Transverse colon (tissue), 4 donors: ENCODE measurements at regions of chr6 and their contacts with region 1.

Region 1: DNA sequence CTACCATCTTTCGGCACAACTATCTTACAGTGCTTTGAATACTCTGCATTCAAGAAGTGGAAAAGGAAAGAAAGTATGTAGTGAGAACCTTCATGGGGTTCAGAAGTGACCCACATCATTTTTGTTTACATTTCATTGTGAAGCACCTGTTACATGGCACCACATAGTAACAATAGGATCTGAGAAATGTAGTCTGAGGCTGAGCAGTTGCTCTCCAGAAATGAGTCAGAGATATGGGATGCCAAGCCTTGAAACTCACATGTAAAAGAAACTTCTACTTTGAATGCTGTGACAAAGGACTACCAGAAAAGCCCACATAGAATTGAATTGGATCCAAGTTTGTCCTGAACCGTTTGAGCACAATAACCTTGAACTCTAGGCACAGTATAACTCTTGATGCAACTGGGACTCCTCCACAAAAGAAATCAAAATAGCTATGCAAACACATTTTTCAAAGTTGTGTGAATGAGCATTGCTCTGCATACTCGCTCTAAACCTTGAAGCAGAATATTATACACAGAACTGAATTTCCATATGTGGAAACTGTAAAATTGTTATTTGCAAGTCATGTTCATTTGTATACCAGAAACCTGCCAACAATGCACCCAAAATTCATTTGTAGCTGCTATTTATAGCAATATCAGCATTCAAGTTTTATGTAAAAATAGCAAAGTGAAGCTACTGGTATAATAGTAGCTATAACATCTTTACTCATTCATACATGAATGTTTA is 400.9 kb upstream of the POU3F2 start:
- DNase-seq: no peak
- H3K4me3 ChIP-seq: no peak overlapping the region
- H3K27ac ChIP-seq: no peak overlapping the region
- H3K4me1 ChIP-seq: no peaks in the 10 kb centered on the region
- H3K27me3 ChIP-seq: no peaks in the 10 kb centered on the region
- CTCF ChIP-seq: no peak
- EP300 ChIP-seq: no peak
- POLR2A ChIP-seq: no peak

Region 2: DNA sequence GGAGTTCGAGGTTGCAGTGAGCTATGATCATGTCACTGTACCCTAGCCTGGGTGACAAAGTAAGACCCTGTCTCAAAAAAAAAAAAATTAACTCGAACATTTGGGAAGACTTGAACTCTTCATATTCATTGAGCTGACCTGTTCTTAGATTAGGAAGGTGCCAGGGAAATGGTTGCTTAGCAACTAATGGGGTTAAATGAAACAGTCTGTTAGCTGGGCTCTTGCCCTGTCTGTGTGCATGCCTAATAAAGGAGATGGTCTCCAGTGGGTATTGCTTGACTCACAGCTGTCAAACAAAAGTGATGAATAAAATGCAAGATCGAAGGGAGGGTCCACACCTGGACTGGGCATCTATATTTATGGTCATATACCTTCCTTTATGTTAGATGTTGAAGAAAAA is 1407.2 kb before region 1 on chr6:
- in situ Hi-C with region 1: no loop called
- intact Hi-C with region 1: loop called (anchors 5 kb)
- DNase-seq: no peak
- H3K4me3 ChIP-seq: no peak overlapping the region
- H3K27ac ChIP-seq: no peak overlapping the region
- H3K4me1 ChIP-seq: no peaks in the 10 kb centered on the region
- H3K27me3 ChIP-seq: no peaks in the 10 kb centered on the region
- CTCF ChIP-seq: no peak
- EP300 ChIP-seq: no peak
- POLR2A ChIP-seq: no peak

Region 3: DNA sequence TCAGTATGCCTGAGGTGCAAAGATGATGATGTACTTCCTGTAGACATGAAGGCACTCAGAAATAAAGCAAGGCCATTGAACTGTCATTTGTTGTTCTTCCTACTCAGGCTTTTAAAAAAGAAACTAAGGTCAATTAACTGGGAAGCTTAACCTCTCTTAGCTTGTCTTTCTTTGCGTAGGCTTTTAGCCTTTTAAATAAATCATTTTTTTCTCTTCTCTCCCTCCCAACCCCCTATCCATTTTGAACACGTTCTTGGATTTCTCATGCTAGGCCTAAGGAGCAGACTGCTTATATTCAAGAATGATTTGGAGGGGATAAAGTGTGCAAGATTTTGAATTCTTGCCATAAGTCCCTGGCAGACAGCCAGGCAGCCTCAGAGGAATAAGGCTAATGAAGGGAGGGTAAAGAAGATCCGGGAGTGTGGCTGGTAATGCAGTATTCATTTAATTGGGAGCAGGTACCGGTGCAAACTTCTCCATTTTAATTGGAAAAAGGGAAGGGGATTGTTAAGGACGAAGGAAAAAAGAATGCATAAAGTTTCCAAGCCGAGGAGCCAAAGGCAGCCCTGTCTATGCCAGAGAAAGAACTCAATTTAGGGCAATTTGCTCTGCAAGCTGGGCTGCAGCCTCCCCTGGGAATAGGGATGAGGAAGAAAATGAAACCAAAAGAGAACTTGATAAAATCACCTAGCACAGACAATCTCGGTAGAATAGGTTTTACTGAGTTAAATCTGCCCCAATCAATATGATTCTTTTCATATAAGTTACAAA is 806.6 kb before region 1 on chr6:
- in situ Hi-C with region 1: no loop called
- intact Hi-C with region 1: no loop called
- DNase-seq: no peak
- H3K4me3 ChIP-seq: peak overlapping the region in 1 of 4 donors; percentile 11
- H3K27ac ChIP-seq: no peak overlapping the region
- H3K4me1 ChIP-seq: no peaks in the 10 kb centered on the region
- H3K27me3 ChIP-seq: no peaks in the 10 kb centered on the region
- CTCF ChIP-seq: no peak
- EP300 ChIP-seq: no peak
- POLR2A ChIP-seq: no peak